GM10248 (cell line): ENCODE measurements at regions of chr6 and their contacts with region 1.

Region 1: DNA sequence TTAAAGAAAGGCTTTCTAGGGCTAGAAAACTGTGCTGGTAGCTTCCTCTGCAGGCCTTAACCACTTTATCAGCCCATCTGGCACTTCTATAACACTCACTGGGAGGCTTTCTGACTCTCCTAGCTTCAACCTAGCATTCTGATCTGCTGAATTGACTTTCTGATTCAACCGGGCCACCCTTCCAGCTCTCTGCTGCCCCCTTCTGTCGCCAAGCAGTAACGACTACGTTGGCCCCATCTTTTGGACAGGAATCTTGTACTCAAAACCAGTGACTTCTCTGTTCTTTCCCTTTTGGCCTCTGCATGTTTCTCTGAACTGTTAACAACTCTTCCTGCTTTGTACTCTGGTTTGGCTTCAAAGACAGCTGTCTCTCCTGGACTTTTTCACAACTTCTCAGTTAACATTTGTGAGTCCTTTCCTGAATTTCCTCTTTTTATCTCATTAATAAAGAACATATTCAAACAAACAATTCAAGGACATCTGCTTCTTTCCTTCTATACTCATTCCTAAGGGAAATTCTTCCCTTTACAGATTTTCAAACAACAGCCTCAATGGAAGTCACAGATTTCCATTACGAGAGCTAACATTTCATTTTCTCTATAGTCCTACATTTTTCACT is 43.9 kb upstream of the FAM135A start:
- DNase-seq: peak; percentile 63
- CTCF ChIP-seq: peak; percentile 88

Region 2: DNA sequence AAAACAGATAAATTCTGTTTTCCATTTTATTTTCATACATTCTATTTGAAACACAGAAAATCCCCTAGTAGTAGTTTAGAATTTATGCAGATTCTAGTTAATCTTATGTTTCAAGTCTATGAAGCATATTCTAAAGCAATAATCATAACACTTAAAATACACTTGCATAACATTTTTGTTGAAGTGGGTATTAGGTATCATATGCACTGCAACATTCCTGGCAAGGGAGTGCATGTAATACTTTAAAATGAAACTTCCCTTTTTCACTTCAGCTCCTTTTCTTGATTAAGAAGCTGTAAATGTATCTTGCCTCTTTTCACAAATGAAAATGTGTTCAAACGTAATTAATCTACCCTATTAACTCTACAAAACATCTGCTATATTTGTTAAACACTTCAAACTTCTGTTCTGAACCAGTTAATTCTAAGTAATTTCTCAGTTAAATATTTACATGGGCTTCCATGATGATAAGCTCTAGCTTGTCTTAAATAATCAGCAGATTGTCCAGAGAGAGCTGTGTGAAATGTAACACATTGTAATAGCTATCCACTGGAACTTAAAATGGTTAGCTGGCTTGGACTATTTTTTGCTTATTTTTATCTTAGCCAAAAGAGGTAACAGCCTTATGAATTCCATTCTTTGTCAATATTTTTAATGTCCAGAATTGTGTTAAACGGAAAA is 310.3 kb before region 1 on chr6:
- CTCF ChIA-PET with region 1: no interaction called
- POLR2A ChIA-PET with region 1: no interaction called
- DNase-seq: no peak
- CTCF ChIP-seq: no peak

Region 3: DNA sequence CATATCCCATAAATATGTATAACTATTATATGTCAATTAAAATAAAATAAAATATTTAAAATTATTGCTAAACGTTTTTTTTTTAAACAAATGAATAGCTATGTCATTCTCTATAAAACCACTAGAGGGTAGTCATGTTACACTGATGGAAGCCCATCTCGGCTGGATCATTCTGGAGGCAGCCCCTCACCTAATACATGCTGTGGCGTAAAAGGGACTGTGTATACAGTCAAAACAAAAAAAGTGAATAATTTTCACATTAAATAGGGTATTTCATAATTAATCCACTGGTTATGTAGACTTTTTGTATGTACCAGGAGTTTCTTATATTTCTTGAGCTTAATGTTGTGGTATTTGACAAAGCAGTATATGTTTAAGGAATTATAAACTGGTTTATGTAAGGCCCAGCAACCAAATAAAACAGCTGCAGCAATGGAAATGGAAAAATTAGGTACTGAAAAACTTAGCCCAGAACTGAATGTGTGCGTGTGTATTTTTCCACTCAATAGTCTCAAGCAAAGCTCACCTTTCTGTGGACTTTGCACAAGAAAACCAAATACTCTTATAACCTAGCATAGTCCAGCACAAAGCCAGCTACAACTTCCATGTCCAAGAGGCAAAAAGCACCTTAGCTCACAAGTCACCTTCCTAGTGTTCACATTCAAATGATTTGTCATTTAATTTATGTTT is 148.3 kb before region 1 on chr6:
- CTCF ChIA-PET with region 1: interaction called, 54 read pairs
- POLR2A ChIA-PET with region 1: no interaction called
- DNase-seq: peak; percentile 43
- CTCF ChIP-seq: peak; percentile 52

Region 4: DNA sequence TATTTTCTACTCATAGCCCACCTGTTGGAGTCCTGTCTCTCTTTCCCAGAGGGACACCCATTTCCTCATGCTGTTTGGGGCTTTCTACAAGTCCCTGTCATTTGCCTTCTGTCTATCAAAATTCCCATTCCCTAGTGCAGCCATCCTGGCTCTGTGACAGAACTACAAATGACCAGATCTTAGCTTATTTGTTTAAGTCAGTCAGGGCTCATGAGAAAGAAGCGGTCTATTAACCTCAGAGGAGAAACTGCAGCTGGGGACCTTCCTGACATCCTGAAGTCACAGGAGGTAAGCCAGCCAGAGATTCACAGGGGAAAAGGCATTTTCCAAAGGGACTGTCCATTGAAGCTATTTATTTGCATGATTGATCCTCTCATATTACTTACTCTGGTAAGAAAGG is 64.8 kb before region 1 on chr6:
- CTCF ChIA-PET with region 1: interaction called, 137 read pairs
- POLR2A ChIA-PET with region 1: no interaction called
- DNase-seq: no peak
- CTCF ChIP-seq: no peak

Region 5: DNA sequence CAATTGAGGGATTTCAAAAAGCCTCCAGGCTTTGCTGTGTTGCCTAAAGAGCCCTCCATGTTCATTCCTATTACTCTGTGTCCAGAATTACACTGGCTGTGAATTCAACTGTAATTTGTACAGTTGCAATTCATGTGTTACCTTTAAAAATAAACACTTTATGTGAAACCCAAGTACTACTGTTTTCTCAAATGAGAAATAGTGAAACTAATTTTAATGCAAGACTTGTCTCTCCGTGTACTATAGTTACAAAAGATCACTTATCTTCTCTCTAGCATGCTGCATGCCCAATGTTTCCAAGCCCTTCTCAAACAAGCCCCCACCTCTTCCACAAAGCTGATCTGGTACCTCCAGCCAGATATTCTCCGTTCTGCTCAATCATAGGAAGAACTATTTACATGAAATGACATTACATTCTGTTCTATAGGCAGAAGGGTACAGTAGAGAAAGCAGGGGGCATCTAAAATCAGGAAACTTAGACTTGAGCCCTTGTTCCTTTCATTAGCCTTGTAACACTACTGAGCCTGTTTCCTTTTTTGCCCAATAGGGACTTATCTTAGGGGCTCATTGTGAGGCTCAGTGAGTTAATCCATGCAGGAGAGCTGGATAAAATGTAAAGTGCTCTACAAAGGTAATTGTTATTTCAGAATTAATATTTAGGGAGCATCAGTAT is 54.2 kb before region 1 on chr6:
- CTCF ChIA-PET with region 1: interaction called, 137 read pairs
- POLR2A ChIA-PET with region 1: no interaction called
- DNase-seq: peak; percentile 8
- CTCF ChIP-seq: no peak

Region 6: GRCh38 chr6:70380271-70380670 is 10.8 kb after region 1 on chr6:
- CTCF ChIA-PET with region 1: interaction called, 39 read pairs
- POLR2A ChIA-PET with region 1: no interaction called
- DNase-seq: no peak
- CTCF ChIP-seq: no peak

Region 7: DNA sequence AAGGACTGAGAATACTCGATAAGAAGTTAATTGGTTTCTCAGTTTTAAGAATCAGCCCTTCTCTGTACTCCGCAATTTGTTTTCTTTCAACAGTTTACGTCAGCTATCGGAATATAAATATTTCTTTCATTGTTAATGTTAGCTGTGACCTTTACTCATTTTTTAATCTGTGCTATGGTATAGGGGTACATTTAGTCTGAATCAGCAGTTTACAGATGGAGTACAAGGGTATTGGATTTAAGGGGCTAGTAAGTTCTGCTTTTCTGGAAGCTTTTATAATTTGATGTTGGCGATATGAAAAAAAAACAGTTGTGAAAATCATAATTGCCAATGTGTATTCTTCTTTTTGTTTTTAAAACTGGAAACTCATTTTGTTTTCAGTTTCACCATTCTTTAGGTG is 66.9 kb after region 1 on chr6:
- CTCF ChIA-PET with region 1: no interaction called
- POLR2A ChIA-PET with region 1: no interaction called
- DNase-seq: no peak
- CTCF ChIP-seq: no peak

Region 8: DNA sequence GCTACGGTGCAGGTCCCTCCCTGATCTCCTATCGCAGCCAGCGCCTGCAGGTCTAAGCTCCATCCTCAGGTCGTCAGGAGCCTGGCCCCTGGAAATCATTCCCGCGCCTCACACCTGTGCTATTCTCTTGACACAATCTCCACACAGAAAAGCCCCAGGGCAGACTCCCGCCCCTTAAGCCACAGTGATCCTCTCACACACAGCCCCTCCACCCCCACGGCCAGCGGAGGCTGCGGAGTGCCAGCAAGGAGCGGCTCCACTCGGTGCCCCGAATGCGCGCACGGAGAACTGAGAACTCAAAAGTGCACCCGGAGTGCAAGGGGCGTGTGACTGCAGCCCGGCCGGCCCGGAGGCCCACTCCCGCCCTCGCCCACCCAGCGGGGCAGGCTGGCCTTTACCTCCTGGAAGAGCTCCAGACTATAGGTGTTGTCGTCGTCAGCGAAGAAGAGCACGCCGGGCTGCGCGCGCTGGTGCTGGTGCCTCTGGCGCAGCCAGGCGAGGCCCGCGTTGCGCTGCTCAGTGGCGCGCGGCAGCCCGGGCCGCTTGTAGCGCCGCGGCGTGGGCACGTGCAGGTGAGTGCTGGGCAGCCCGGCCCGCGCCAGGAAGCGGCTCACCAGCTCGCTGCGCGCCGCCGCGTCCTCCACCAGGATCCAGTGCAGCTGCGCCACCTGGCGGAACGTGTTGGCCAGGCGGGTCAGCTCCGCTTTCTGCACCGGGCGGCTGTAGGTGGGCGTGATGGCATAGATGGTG is 586.2 kb after region 1 on chr6:
- CTCF ChIA-PET with region 1: interaction called, 10 read pairs
- POLR2A ChIA-PET with region 1: no interaction called
- DNase-seq: peak; percentile 85
- CTCF ChIP-seq: peak; percentile 97